Heart left ventricle (tissue), 16 donors: ENCODE measurements at regions of chr1 and their contacts with region 1.

Region 1: GRCh38 chr1:44523593-44524591 is 118.8 kb downstream of the RNF220 start:
- DNase-seq: no peak
- ATAC-seq: no peak
- H3K4me3 ChIP-seq: peak overlapping the region in 9 of 12 donors; percentile 2 to 36 (median 17)
- H3K27ac ChIP-seq: no peak overlapping the region
- H3K4me1 ChIP-seq: peaks cover 0 to 15% (median 0%) of the 10 kb centered on the region in 12 donors
- H3K27me3 ChIP-seq: peaks cover 0 to 8% (median 0%) of the 10 kb centered on the region in 9 donors
- CTCF ChIP-seq: no peak
- POLR2A ChIP-seq: no peak

Region 2: DNA sequence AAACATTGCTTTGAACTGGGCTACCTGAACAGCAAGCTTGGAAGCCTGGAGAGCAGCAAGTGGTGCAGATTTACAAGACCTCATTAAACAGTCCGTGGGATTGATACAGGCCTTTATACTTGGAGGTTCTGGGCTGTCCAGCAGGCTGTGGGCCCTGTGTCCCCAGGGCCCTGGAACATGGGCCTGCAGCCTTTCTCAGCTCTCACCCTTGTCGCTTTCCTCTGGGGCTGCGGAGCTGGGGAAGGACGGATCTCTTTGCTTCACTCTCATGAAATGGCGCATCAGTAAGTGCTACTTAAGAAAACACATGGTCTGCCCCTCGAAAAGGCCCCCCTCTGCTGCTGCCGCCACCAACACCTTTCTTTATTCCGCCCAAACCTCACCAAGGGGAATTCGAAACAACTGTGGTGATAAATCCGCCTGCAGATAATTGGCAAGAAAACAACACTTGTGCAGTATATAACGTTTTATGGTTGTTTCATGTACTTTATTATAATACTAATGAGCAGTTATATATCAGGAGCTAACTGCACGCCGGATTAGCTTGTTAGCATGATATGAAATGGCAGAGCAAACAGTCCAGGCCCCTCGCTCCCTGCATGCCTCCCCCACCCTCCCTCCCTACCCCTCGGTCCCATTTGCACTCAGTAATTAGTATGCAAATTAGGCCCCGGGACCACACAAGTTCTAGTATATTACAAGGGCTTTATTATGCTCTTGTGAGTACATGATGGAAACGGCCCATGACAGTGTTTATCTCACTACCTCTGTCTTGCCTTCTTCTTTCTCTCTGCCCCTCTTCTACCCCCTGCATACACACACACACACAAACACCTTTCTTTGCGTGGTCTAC is 12.7 kb after region 1 on chr1:
- intact Hi-C with region 1: loop called in 1 of 10 experiments (anchors 2 kb)
- DNase-seq: no peak
- ATAC-seq: no peak
- H3K4me3 ChIP-seq: no peak overlapping the region
- H3K27ac ChIP-seq: no peak overlapping the region
- H3K4me1 ChIP-seq: no peaks in the 10 kb centered on the region
- H3K27me3 ChIP-seq: peaks cover 0 to 3% (median 0%) of the 10 kb centered on the region in 9 donors
- CTCF ChIP-seq: no peak
- POLR2A ChIP-seq: no peak